ENCODE measurements at regions of chr5 and their contacts with region 1.

Region 1: DNA sequence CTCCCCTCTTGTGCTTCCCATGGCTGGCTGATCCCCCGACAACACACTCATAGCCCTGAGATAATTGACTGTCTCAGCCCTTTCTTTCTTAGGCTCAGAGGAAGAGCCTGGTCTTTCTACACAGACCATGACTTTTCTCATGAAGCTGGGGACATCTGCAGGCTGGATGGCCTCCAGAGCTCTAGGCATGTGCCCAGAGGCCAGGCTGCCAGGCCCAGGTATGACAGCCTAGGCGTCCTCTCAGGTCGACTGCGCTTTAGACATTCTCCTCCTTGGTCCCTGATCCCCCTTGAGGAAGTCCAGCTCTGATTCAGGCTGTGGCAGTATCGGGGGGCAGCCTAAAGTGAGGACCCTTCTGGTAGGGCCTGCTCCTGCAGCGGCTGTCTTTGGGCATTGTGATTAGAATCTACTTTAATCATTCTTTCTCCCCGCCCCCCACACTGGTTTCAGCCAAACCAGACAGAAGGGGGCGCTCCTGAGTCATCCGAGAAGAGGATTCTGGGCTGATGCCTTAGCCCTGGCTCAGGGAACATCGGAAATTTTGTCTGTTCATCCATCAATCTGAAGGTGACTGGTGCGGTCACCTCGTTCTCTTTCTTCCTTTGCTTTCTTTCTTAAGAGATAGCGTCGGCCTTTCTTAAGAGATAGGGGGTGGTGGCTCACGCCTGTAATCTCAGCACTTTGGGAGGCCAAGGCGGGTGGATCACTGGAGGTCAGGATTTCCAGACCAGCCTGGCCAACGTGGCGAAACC is 66.5 kb upstream of the HSPA9 start:
- DNase-seq: peak; percentile 59 to 84 (median 61)
- ATAC-seq: peak in 3 of 4 donors; percentile 56 to 77 (median 75)
- H3K4me3 ChIP-seq: no peak overlapping the region
- H3K27ac ChIP-seq: no peak overlapping the region
- H3K4me1 ChIP-seq: peaks cover 0 to 6% (median 0%) of the 10 kb centered on the region in 12 donors
- H3K27me3 ChIP-seq: peaks cover 0 to 4% (median 0%) of the 10 kb centered on the region in 9 donors
- CTCF ChIP-seq: peak; percentile 62 to 83 (median 76)
- POLR2A ChIP-seq: no peak

Region 2: DNA sequence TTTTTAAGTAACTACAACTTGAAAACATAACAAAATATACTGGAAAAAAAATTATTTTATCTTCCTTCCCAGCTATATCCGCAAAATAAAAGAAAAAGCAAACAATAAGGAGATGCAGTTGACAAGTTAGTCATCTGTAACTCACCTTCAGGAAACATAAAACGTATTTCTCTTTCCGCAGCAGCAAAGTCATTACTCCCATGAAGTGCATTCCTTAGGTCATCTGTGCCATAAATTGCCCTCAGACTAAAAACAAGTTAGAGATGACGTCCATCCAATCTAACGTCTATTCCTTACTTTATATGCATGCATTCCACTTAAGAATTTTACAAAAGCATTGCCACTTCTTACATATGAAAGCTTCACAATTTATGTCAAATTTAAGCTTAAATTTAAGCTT is 513.4 kb before region 1 on chr5:
- intact Hi-C with region 1: no loop called
- DNase-seq: no peak
- ATAC-seq: no peak
- H3K4me3 ChIP-seq: no peak overlapping the region
- H3K27ac ChIP-seq: no peak overlapping the region
- H3K4me1 ChIP-seq: no peaks in the 10 kb centered on the region
- H3K27me3 ChIP-seq: no peaks in the 10 kb centered on the region
- CTCF ChIP-seq: no peak
- POLR2A ChIP-seq: no peak

Region 3: GRCh38 chr5:138654281-138654867 is 12.7 kb after region 1 on chr5:
- intact Hi-C with region 1: no loop called
- DNase-seq: no peak
- ATAC-seq: peak in 1 of 4 donors; percentile 8
- H3K4me3 ChIP-seq: no peak overlapping the region
- H3K27ac ChIP-seq: peak overlapping the region in 1 of 12 donors; percentile 9
- H3K4me1 ChIP-seq: peaks cover 0 to 17% (median 7%) of the 10 kb centered on the region in 12 donors
- H3K27me3 ChIP-seq: peaks cover 0 to 23% (median 0%) of the 10 kb centered on the region in 9 donors
- CTCF ChIP-seq: no peak
- POLR2A ChIP-seq: no peak

Region 4: GRCh38 chr5:138752341-138752950 is 110.7 kb after region 1 on chr5:
- intact Hi-C with region 1: no loop called
- DNase-seq: peak in 4 of 5 donors; percentile 20 to 40 (median 26)
- ATAC-seq: peak in 2 of 4 donors; percentile 2 to 4
- H3K4me3 ChIP-seq: peak overlapping the region; percentile 63 to 100 (median 95)
- H3K27ac ChIP-seq: peak overlapping the region; percentile 99 to 100 (median 100)
- H3K4me1 ChIP-seq: peaks cover 13 to 39% (median 30%) of the 10 kb centered on the region in 12 donors
- H3K27me3 ChIP-seq: no peaks in the 10 kb centered on the region
- CTCF ChIP-seq: peak in 3 of 12 donors; percentile 14 to 25 (median 21)
- POLR2A ChIP-seq: no peak

Region 5: DNA sequence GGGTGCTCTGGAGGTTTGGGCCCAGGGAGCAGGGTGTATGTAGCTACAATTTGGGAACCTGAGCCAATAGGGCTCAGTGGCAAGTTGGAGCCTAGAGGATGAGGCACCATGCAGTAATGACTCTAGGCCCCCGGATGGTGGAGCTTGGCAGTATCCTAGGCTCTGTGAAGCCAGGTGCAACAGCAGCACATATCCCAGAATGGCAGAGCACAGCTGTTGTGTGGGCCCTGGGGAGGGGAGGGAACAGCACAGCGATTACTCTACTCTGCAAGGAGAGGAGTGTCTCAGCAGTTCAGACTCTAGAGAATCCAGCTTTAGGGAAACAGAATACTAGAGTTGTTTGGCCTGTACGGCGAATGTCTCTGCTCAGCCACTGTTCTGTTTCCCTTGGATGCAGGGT is 177.4 kb after region 1 on chr5:
- intact Hi-C with region 1: loop called in 1 of 10 experiments (anchors 10 kb)
- DNase-seq: no peak
- ATAC-seq: peak in 3 of 4 donors; percentile 12 to 55 (median 31)
- H3K4me3 ChIP-seq: no peak overlapping the region
- H3K27ac ChIP-seq: no peak overlapping the region
- H3K4me1 ChIP-seq: peaks cover 4 to 63% (median 33%) of the 10 kb centered on the region in 12 donors
- H3K27me3 ChIP-seq: no peaks in the 10 kb centered on the region
- CTCF ChIP-seq: no peak
- POLR2A ChIP-seq: no peak

Region 6: GRCh38 chr5:139131465-139131864 is 489.7 kb after region 1 on chr5:
- intact Hi-C with region 1: loop called in 1 of 10 experiments (anchors 10 kb)
- DNase-seq: peak in 4 of 5 donors; percentile 51 to 75 (median 70)
- ATAC-seq: peak; percentile 70 to 78 (median 76)
- H3K4me3 ChIP-seq: peak overlapping the region in 8 of 12 donors; percentile 4 to 36 (median 26)
- H3K27ac ChIP-seq: peak overlapping the region; percentile 68 to 92 (median 88)
- H3K4me1 ChIP-seq: peaks cover 0 to 57% (median 38%) of the 10 kb centered on the region in 12 donors
- H3K27me3 ChIP-seq: no peaks in the 10 kb centered on the region
- CTCF ChIP-seq: no peak
- POLR2A ChIP-seq: no peak